T-cell (primary cell): ENCODE measurements at regions of chr1 and their contacts with region 1.

Region 1: DNA sequence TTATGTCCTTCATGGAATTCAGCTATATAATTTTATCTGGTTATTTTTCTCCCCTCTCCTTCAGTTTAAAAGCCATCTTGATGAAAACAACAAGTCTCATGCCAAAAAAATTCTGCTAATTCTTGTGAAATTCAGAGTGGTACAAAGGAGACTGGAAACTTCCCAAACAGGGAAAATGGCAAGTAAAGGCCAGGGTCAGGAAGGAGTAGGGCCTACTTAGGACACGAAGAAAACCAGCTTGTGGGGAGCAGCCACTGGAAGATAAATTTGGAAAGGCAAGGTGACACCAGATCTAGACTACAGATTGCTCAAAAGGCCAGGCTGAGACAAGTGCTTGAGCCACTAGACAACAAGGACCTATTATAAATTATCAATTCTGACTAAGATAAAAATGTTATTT is 6.4 kb downstream of the TSTD1 start:
- DNase-seq: no peak
- ATAC-seq: no peak
- H3K4me3 ChIP-seq: no peak overlapping the region
- H3K4me3 Mint-ChIP-seq: no peak overlapping the region
- H3K27ac ChIP-seq: no peak overlapping the region
- H3K27ac Mint-ChIP-seq: no peak overlapping the region
- H3K4me1 ChIP-seq: peaks cover 0 to 5% of the 10 kb centered on the region in 2 experiments
- H3K4me1 Mint-ChIP-seq: peaks cover 14 to 22% (median 19%) of the 10 kb centered on the region in 3 donors
- H3K27me3 ChIP-seq: no peaks in the 10 kb centered on the region
- H3K27me3 Mint-ChIP-seq: no peaks in the 10 kb centered on the region

Region 2: DNA sequence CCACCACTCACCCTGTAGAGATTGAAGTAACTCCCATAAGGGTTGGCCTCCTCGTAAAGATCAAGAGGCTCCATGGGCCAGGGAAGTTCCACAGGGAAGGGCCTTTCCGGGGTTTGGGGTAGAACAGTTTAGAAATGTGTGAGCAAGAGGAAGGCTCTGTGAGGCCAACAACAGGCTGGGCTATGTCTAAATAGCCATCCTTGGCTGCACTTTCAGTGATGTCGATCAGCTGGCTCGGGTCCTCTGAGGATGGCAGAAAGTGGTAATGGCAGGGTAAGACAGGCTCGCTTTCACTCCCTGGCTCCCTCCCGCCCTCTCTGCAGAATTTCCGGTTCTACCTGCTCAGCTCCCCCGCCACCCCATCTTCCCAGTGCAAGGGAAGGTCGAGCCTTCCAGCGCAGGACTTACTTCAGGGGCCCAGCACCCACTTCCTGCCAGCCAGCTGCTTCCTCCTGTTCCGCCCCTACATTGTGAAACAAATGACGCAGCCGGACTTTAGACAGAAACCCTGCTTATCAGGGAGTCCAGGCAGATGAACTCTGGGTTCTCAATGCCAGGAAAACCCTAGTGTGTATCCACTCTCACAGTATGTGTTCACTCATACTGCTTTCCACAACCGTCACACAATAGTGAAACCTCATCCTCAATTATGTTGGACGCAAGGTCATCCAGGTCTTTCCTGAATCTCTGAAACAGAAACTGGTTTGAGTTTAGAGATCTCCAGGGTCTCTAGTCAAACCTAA is 18.8 kb before region 1 on chr1:
- CTCF ChIA-PET with region 1: interaction called in 1 of 2 experiments, 11 read pairs
- POLR2A ChIA-PET with region 1: no interaction called
- DNase-seq: peak; percentile 41 to 76 (median 58)
- ATAC-seq: peak; percentile 81 to 92 (median 86)
- H3K4me3 ChIP-seq: peak overlapping the region; percentile 25 to 35
- H3K4me3 Mint-ChIP-seq: peak overlapping the region; percentile 71 to 78 (median 78)
- H3K27ac ChIP-seq: peak overlapping the region; percentile 89
- H3K27ac Mint-ChIP-seq: peak overlapping the region; percentile 97 to 99
- H3K4me1 ChIP-seq: peaks cover 20 to 27% of the 10 kb centered on the region in 2 experiments
- H3K4me1 Mint-ChIP-seq: peaks cover 21 to 44% (median 41%) of the 10 kb centered on the region in 3 donors
- H3K27me3 ChIP-seq: no peaks in the 10 kb centered on the region
- H3K27me3 Mint-ChIP-seq: no peaks in the 10 kb centered on the region